ENCODE measurements at regions of chr15 and their contacts with region 1.

Region 1: DNA sequence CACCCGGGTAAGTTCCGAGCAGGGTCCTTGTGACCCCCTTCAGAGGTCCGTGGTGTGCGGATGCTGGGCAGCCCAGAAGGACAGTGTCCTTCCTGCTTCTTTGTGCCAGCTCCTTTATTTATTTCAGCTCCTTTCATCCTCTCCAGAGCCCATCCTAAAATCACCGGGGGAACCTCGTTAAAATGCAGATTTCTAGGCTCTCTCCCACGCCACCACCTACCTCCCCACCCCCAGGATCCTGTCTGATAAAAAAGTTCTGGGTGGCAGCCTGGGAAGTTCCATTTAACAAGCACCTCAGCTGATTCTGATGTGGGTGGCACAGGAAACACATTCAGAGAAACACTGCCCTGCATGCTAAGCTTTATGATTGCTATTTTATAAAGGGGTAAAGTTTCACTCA is 12.5 kb upstream of the IGF1R start:
- DNase-seq: no peak
- H3K4me3 ChIP-seq: no peak overlapping the region
- H3K27ac ChIP-seq: no peak overlapping the region
- H3K4me1 ChIP-seq: no peaks in the 10 kb centered on the region
- H3K27me3 ChIP-seq: no peaks in the 10 kb centered on the region
- CTCF ChIP-seq: no peak

Region 2: DNA sequence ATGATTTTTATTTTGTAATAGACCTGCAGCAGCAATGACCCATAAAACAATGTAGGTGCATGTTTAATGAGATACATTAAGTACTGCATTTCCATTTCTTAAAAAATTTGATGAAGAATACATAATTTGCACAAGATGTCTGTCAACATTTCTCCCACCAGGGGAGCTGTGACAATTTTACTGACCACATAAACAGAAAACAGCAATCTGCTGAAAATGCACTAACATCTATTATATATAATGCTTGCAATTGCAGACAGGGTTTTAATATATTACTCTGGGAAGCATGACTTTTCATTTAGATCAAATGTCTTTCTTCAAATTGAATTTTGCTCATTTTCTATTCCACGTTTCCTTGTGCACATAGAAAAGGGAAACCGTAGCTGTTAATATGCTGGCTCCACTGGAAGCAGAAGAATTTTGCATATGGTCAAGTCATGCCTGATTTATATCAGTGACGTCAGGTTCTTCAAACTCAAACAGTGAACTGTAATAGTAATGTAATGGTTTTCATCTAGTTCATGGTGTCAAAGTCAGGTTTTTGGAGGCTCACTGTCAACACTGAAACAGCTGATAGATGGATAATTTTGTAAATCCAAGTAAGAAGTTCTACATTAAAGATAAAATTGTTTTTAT is 67.3 kb before region 1 on chr15:
- intact Hi-C with region 1: loop called (anchors 10 kb)
- DNase-seq: no peak
- H3K4me3 ChIP-seq: no peak overlapping the region
- H3K27ac ChIP-seq: no peak overlapping the region
- H3K4me1 ChIP-seq: no peaks in the 10 kb centered on the region
- H3K27me3 ChIP-seq: peaks cover 0 to 20% of the 10 kb centered on the region in 2 donors
- CTCF ChIP-seq: peak; percentile 18 to 22

Region 3: DNA sequence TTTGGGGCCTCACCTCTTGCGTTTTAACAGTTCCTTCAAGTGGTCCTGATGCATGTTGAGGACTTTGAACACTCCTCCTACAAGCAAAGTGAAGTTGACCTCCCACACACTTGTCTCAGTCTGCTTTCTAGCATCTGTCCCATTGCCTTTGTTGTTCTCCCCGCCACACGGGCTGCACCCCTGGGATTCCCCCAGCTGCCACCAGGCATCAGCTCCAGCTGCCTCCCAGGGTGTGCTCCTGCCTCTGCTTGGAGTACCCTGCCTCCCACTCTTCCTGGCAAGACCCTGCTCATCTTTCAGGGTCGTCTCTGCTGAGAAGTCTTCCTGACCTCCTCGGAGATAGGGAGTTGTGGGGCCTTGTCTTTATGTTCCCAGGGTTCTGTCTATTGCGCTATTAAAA is 64.7 kb after region 1 on chr15:
- intact Hi-C with region 1: no loop called
- DNase-seq: no peak
- H3K4me3 ChIP-seq: no peak overlapping the region
- H3K27ac ChIP-seq: no peak overlapping the region
- H3K4me1 ChIP-seq: peaks cover 3 to 94% (median 65%) of the 10 kb centered on the region in 4 donors
- H3K27me3 ChIP-seq: no peaks in the 10 kb centered on the region
- CTCF ChIP-seq: no peak